Right cardiac atrium (tissue), 5 donors: ENCODE measurements at regions of chr9 and their contacts with region 1.

Region 1: DNA sequence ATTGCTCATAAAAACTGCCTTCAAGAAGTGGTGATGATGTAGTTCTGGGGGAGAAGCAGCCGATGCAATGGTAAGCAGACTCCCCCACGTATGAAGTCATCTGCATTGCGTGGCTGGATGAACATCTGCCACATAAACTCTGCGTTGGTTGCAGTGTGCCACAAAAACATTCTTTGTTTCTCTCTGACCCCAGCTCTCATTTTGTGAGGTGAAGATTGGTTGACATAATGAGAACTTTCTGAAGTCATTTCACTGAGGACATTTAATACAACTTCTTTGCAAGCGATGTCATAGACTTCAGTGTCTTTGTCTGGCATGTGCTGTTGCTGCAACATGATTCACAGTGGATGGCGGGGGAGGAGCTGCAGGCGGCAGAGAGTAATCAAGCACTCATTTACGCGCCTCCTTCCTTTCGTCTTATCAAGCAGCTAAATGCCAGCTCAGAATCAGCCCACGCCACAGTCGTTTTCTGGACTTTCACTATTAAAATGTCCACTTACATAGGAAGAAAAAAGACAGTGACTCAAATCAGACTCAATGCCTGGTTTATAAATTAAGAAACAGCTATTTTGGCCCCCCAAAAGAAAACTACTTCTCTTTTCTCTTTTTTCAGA is 91.5 kb upstream of the NFIL3 start:
- DNase-seq: peak in 2 of 3 donors; percentile 65 to 70
- ATAC-seq: peak; percentile 74 to 92
- H3K4me3 ChIP-seq: peak overlapping the region; percentile 26
- H3K27ac ChIP-seq: peak overlapping the region; percentile 52
- H3K4me1 ChIP-seq: peaks cover 5% of the 10 kb centered on the region
- H3K27me3 ChIP-seq: no peaks in the 10 kb centered on the region

Region 2: DNA sequence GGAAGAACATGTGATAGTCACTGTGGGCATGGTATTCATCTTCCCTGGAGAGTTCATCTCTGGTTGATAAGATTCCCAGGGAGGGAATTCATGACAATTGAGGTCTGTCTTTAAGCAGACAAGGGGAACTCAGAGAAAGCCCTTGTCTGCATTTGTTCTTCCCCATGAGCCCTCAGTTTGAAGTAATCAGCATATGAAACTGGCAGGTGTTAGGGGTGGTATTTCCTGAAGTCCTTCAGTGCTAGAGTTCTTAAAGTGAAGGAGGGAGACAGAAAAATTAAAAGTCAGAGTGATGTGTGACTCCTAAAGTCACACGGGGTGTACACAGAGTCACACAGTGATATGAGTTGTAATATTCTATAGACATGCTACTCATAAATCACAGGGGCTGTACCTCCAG is 774.1 kb before region 1 on chr9:
- intact Hi-C with region 1: no loop called
- DNase-seq: no peak
- ATAC-seq: no peak
- H3K4me3 ChIP-seq: no peak overlapping the region
- H3K27ac ChIP-seq: no peak overlapping the region
- H3K4me1 ChIP-seq: no peaks in the 10 kb centered on the region
- H3K27me3 ChIP-seq: no peaks in the 10 kb centered on the region

Region 3: GRCh38 chr9:91451519-91452270 is 63.5 kb before region 1 on chr9:
- intact Hi-C with region 1: loop called in 1 of 4 experiments (anchors 10 kb)
- DNase-seq: no peak
- ATAC-seq: no peak
- H3K4me3 ChIP-seq: no peak overlapping the region
- H3K27ac ChIP-seq: no peak overlapping the region
- H3K4me1 ChIP-seq: no peaks in the 10 kb centered on the region
- H3K27me3 ChIP-seq: no peaks in the 10 kb centered on the region

Region 4: GRCh38 chr9:91580136-91580535 is 65.0 kb after region 1 on chr9:
- intact Hi-C with region 1: no loop called
- DNase-seq: no peak
- ATAC-seq: no peak
- H3K4me3 ChIP-seq: no peak overlapping the region
- H3K27ac ChIP-seq: no peak overlapping the region
- H3K4me1 ChIP-seq: peaks cover 2% of the 10 kb centered on the region
- H3K27me3 ChIP-seq: no peaks in the 10 kb centered on the region